ENCODE measurements at regions of chr1 and their contacts with region 1.

Region 1: DNA sequence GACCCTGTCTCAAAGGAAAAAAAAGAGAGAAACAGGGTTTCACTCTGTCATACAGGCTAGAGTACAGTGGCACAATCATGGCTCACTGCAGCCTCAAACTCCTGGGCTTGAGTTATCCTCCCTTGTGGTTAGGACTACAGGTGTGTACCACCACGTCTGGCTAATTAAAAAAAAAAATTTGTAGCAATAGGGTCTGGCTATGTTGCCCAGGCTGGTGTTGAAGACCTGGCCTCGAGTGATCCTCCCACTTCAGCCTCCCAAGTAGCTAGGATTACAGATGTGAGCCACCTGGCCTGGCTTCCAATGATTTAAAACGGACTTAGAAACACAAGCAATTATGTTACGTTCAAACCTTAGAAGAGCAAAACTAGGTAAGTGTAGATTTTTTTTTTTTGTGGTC is 22.1 kb downstream of the GOLPH3L start:
- DNase-seq: no peak
- ATAC-seq: no peak
- H3K4me3 ChIP-seq: no peak overlapping the region
- H3K27ac ChIP-seq: no peak overlapping the region
- H3K4me1 ChIP-seq: no peaks in the 10 kb centered on the region
- CTCF ChIP-seq: no peak
- EP300 ChIP-seq: no peak
- POLR2A ChIP-seq: no peak
- RAD21 ChIP-seq: no peak

Region 2: DNA sequence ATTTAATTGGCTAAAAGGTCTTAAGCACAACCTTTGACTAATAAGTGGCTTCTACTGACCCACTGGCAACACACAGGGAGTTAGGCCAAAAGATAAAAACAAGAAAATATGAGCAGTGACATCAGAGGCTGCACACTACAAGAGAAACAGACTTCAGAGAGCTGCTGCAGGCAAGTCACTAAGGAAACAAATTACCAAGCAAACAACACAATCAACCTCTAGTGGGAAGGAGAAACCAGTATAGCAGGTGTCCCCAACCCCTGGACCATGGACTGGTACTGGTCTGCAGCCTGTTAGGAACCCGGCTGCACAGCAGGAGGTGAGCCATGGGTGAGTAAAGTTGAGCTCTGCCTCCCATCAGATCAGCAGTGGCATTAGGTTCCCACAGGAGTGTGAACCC is 24.7 kb before region 1 on chr1:
- CTCF ChIA-PET with region 1: no interaction called
- POLR2A ChIA-PET with region 1: no interaction called
- DNase-seq: no peak
- ATAC-seq: no peak
- H3K4me3 ChIP-seq: no peak overlapping the region
- H3K27ac ChIP-seq: no peak overlapping the region
- H3K4me1 ChIP-seq: peaks cover 4% of the 10 kb centered on the region; the same call in 1 of the 3 replicates
- CTCF ChIP-seq: no peak
- EP300 ChIP-seq: no peak
- POLR2A ChIP-seq: no peak
- RAD21 ChIP-seq: no peak

Region 3: GRCh38 chr1:150662811-150663210 is 12.1 kb before region 1 on chr1:
- CTCF ChIA-PET with region 1: interaction called, 12 read pairs
- POLR2A ChIA-PET with region 1: no interaction called
- DNase-seq: no peak
- ATAC-seq: no peak; a peak in 1 of 6 replicates
- H3K4me3 ChIP-seq: no peak overlapping the region
- H3K27ac ChIP-seq: no peak overlapping the region
- H3K4me1 ChIP-seq: peaks cover 11% of the 10 kb centered on the region
- CTCF ChIP-seq: no peak
- EP300 ChIP-seq: no peak
- POLR2A ChIP-seq: no peak
- RAD21 ChIP-seq: no peak

Region 4: GRCh38 chr1:150708595-150708994 is 33.7 kb after region 1 on chr1:
- CTCF ChIA-PET with region 1: no interaction called
- POLR2A ChIA-PET with region 1: no interaction called
- DNase-seq: no peak
- ATAC-seq: no peak
- H3K4me3 ChIP-seq: no peak overlapping the region
- H3K27ac ChIP-seq: no peak overlapping the region
- H3K4me1 ChIP-seq: no peaks in the 10 kb centered on the region
- CTCF ChIP-seq: no peak
- EP300 ChIP-seq: no peak
- POLR2A ChIP-seq: no peak
- RAD21 ChIP-seq: no peak